OCI-LY7 (cell line): ENCODE measurements at regions of chr6 and their contacts with region 1.

Region 1: DNA sequence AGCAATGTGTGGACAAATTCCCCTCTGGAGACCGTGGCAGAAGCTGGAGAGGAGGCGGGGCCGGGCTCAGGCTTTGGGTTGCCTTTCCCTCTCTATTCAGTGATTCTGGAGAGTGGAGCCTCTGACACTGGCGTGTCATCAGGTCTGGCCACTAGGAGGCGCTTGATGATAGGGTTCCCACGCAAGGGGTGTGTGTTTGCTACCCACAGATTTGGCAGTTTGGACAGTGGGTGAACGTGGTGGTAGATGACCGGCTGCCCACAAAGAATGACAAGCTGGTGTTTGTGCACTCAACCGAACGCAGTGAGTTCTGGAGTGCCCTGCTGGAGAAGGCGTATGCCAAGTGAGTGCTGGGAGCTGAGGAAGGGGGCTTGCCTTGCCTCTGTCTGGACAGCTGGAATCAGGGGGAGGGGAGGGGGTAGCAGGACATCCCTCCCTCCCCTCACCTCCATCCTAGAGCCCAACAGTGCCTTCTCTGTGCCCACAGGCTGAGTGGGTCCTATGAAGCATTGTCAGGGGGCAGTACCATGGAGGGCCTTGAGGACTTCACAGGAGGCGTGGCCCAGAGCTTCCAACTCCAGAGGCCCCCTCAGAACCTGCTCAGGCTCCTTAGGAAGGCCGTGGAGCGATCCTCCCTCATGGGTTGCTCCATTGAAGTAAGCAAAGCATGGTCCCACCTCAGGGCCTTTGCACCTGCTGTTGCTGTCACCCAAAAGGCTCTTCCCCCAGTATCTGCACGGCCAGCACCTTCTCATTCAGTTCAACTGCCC is 14.3 kb downstream of the CAPN11 start:
- DNase-seq: peak; percentile 82
- H3K4me3 ChIP-seq: no peak overlapping the region
- H3K27ac ChIP-seq: no peak overlapping the region
- H3K4me1 ChIP-seq: no peaks in the 10 kb centered on the region
- CTCF ChIP-seq: peak; percentile 98

Region 2: GRCh38 chr6:43963203-43963602 is 209.7 kb before region 1 on chr6:
- CTCF ChIA-PET with region 1: no interaction called
- POLR2A ChIA-PET with region 1: no interaction called
- intact Hi-C with region 1: no loop called
- DNase-seq: no peak
- H3K4me3 ChIP-seq: no peak overlapping the region
- H3K27ac ChIP-seq: no peak overlapping the region
- H3K4me1 ChIP-seq: no peaks in the 10 kb centered on the region
- CTCF ChIP-seq: no peak

Region 3: GRCh38 chr6:44338228-44339122 is 165.6 kb after region 1 on chr6:
- CTCF ChIA-PET with region 1: no interaction called
- POLR2A ChIA-PET with region 1: no interaction called
- intact Hi-C with region 1: loop called (anchors 1 kb)
- DNase-seq: peak; percentile 80
- H3K4me3 ChIP-seq: no peak overlapping the region
- H3K27ac ChIP-seq: no peak overlapping the region
- H3K4me1 ChIP-seq: no peaks in the 10 kb centered on the region
- CTCF ChIP-seq: peak; percentile 86